ENCODE measurements at regions of chr14 and their contacts with region 1.

Region 1: DNA sequence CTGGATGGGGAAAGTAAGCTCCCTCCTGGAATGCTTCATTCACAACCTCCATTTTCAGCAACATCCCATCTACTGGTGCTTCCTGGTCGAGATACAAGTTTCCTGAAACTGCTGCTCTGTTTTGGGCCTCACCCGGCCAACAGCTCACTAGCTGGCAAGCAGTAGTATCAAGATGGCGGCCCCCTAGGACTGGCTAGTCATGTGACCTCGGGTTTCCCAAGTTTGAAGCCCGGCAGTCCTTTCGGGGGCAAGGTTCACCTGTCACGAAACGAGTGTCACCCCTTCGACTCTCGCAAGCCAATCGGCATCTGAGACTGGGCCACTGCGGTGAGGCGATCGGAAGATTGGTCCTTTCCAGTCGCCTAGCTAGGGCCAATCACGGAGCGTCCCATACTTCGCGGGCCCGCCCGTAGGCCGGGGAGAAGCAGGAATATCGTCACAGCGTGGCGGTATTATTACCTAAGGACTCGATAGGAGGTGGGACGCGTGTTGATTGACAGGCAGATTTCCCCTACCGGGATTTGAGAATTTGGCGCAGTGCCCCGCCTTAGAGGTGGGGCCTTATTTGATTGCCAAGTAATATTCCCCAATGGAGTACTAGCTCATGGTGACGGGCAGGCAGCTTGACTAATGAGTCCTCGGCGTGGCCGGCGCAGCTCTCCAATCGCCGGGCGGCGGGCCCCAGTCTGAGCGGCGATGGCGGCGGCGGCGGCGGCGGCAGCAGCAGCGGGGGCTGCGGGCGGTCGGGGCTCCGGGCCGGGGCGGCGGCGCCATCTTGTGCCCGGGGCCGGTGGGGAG is at the start of gene PABPN1:
- DNase-seq: peak; percentile 94
- H3K4me3 ChIP-seq: peak within 1 kb of the TSS; percentile 84 to 92
- H3K27ac ChIP-seq: peak within 1 kb of the TSS; percentile 88 to 93
- H3K4me1 ChIP-seq: peaks cover 13 to 19% of the 10 kb centered on the region in 2 experiments; a peak in 3 of 4 replicates
- H3K27me3 ChIP-seq: no peaks in the 10 kb centered on the region
- CTCF ChIP-seq: no peak
- EP300 ChIP-seq: peak in 1 of 2 experiments; percentile 27; a peak in 1 of 4 replicates
- RAD21 ChIP-seq: no peak
- polyA plus RNA-seq, gene PABPN1: 266 and 444 TPM in 2 replicates

Region 2: DNA sequence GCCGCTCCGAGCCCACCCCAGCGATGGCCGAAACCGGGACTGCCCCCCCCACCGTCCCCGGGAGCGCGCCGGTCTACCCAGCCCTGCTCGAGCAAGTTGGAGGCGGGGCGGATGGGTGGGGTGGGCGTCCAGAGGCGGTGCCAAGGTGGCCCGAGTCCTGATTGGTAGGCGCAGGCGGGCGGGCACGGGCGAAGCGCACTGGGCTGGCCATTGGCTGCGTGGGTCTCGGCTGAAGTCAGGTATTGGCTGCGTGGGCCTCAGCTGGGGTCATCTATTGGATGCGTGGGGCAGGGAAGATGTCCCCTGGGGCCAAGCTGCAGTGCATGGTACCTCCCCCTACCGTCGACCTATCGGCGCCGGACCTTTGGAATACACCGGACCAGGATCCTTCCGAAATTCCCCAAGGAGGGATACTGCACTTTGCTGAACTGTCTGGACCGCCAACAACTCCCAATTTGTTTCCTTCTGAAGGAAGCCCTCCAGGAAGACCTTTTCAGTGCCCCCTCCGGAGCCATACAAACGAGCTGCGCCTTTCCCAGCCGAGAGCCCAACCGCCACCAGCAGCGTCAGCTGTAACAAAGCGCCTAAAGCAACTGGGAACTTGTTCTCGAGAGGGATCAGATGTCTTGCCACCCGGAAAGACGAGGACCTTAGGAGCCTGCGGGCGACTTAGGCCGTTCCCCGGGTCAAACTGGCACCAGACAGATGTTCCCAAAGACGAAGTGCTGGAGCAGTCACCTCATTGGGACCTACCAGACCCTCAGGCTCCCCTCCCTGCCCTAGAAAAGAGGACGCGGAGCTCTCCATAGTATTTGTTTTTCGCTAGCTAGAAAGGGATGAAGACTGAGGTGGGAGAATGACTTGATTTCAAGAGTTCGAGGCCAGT is 34.7 kb before region 1 on chr14 and contains the start of gene HOMEZ:
- CTCF ChIA-PET with region 1: interaction called, 3 read pairs
- POLR2A ChIA-PET with region 1: interaction called, 13 read pairs
- DNase-seq: peak; percentile 97
- H3K4me3 ChIP-seq: peak within 1 kb of the TSS; percentile 89
- H3K27ac ChIP-seq: peak within 1 kb of the TSS; percentile 86 to 92
- H3K4me1 ChIP-seq: peaks cover 8 to 10% of the 10 kb centered on the region in 2 experiments; a peak in 3 of 4 replicates
- H3K27me3 ChIP-seq: no peaks in the 10 kb centered on the region
- CTCF ChIP-seq: no peak
- EP300 ChIP-seq: no peak
- RAD21 ChIP-seq: no peak
- polyA plus RNA-seq, gene HOMEZ: 7.7 and 8.7 TPM in 2 replicates

Region 3: GRCh38 chr14:23301288-23301968 is 19.5 kb before region 1 on chr14:
- CTCF ChIA-PET with region 1: interaction called, 19 read pairs
- POLR2A ChIA-PET with region 1: interaction called, 34 read pairs
- DNase-seq: peak; percentile 98
- H3K4me3 ChIP-seq: peak overlapping the region; percentile 69 to 91
- H3K27ac ChIP-seq: peak overlapping the region; percentile 91 to 93
- H3K4me1 ChIP-seq: peaks cover 14 to 18% of the 10 kb centered on the region in 2 experiments; a peak in 3 of 4 replicates
- H3K27me3 ChIP-seq: no peaks in the 10 kb centered on the region
- CTCF ChIP-seq: peak; percentile 83
- EP300 ChIP-seq: 0 out of 4 replicates have a peak, but pooled peaks of 1 of the 2 experiments have one; percentile 4
- RAD21 ChIP-seq: 0 out of 2 replicates have a peak, but pooled peaks have one; percentile 8

Region 4: GRCh38 chr14:23306410-23307145 is 14.4 kb before region 1 on chr14 and contains the start of gene BCL2L2:
- CTCF ChIA-PET with region 1: interaction called, 19 read pairs
- POLR2A ChIA-PET with region 1: interaction called, 34 read pairs
- DNase-seq: peak; percentile 91
- H3K4me3 ChIP-seq: peak within 1 kb of the TSS; percentile 93 to 97
- H3K27ac ChIP-seq: peak within 1 kb of the TSS; percentile 76 to 93
- H3K4me1 ChIP-seq: peaks cover 13 to 31% of the 10 kb centered on the region in 2 experiments
- H3K27me3 ChIP-seq: no peaks in the 10 kb centered on the region
- CTCF ChIP-seq: no peak
- EP300 ChIP-seq: peak in 1 of 2 experiments; percentile 57; a peak in 1 of 4 replicates
- RAD21 ChIP-seq: no peak
- polyA plus RNA-seq, gene BCL2L2: 30.6 and 49.4 TPM in 2 replicates

Region 5: DNA sequence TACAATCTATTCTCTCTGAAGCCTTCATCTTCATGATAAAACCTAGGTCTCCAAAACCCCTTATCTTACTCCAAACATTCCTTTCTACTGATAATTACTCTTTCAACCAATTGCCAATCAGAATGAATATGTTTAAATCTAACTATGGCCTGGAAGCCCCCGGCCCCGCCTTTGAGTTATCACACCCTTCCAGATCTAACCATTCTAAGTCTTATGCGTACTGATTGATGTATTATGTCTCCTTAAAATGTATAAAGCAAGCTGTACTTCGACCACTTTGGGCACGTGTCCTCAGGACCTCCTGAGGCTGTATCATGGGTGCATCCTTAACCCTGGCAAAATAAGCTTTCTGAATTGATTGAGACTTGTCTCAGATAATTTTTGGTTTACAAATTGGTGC is 14.7 kb after region 1 on chr14:
- CTCF ChIA-PET with region 1: no interaction called
- POLR2A ChIA-PET with region 1: no interaction called
- DNase-seq: no peak
- H3K4me3 ChIP-seq: no peak overlapping the region
- H3K27ac ChIP-seq: no peak overlapping the region
- H3K4me1 ChIP-seq: no peaks in the 10 kb centered on the region
- H3K27me3 ChIP-seq: peaks cover 13% of the 10 kb centered on the region; the same call in 1 of the 2 replicates
- CTCF ChIP-seq: no peak
- EP300 ChIP-seq: no peak
- RAD21 ChIP-seq: no peak

Region 6: GRCh38 chr14:23352511-23353432 is 31.8 kb after region 1 on chr14 and contains the start of gene SLC22A17:
- CTCF ChIA-PET with region 1: interaction called, 30 read pairs
- POLR2A ChIA-PET with region 1: interaction called, 14 read pairs
- DNase-seq: peak; percentile 93
- H3K4me3 ChIP-seq: peak within 1 kb of the TSS; percentile 81 to 82
- H3K27ac ChIP-seq: peak within 1 kb of the TSS; percentile 55 to 92
- H3K4me1 ChIP-seq: peaks cover 0 to 12% of the 10 kb centered on the region in 2 experiments; a peak in 1 of 4 replicates
- H3K27me3 ChIP-seq: no peaks in the 10 kb centered on the region
- CTCF ChIP-seq: no peak
- EP300 ChIP-seq: no peak
- RAD21 ChIP-seq: no peak
- polyA plus RNA-seq, gene SLC22A17: 20.6 and 27.2 TPM in 2 replicates

Region 7: DNA sequence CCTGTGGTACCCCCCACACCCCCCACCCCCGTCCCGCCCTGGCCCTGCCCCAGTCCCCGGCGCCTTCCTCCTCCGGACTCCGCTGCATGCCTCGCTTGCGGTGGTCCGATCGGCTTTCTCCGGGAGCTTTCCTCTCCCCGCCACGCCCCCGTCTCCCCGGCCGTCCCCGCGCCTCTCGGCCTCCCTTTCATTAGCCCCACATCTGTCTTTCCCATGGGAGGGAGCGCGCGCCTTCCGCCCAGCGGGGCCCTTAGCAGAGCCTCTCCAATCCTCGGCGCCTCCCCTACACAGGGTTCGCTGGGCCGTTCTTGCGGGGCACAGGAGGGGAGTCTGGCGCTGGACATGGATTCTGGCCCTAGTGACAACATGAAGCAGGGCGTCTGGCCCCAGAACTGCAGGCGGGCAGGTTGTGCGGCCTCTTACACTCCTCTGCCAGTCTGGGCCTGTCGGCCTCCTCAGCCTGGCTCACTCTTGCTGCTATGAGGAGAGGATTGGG is 45.5 kb after region 1 on chr14:
- CTCF ChIA-PET with region 1: interaction called, 3 read pairs
- POLR2A ChIA-PET with region 1: interaction called, 22 read pairs
- DNase-seq: peak; percentile 90
- H3K4me3 ChIP-seq: peak overlapping the region in 1 of 2 experiments; percentile 57; a peak in 2 of 4 replicates
- H3K27ac ChIP-seq: peak overlapping the region in 1 of 2 experiments; percentile 92; a peak in 2 of 4 replicates
- H3K4me1 ChIP-seq: peaks cover 0 to 16% of the 10 kb centered on the region in 2 experiments; a peak in 2 of 4 replicates
- H3K27me3 ChIP-seq: peaks cover 7% of the 10 kb centered on the region; the same call in 1 of the 2 replicates
- CTCF ChIP-seq: no peak
- EP300 ChIP-seq: no peak
- RAD21 ChIP-seq: no peak

Region 8: GRCh38 chr14:23379366-23380196 is 58.6 kb after region 1 on chr14:
- CTCF ChIA-PET with region 1: interaction called, 179 read pairs
- POLR2A ChIA-PET with region 1: interaction called, 6 read pairs
- DNase-seq: peak; percentile 83
- H3K4me3 ChIP-seq: peak overlapping the region in 1 of 2 experiments; percentile 52; a peak in 1 of 4 replicates
- H3K27ac ChIP-seq: no peak overlapping the region
- H3K4me1 ChIP-seq: peaks cover 0 to 3% of the 10 kb centered on the region in 2 experiments; a peak in 1 of 4 replicates
- H3K27me3 ChIP-seq: peaks cover 8% of the 10 kb centered on the region
- CTCF ChIP-seq: peak; percentile 81
- EP300 ChIP-seq: no peak
- RAD21 ChIP-seq: peak; percentile 87

Measured in SK-N-SH (cell line).